ENCODE measurements at regions of chr3 and their contacts with region 1.

Region 1: GRCh38 chr3:10263646-10264363 is 15.5 kb downstream of the TATDN2 start:
- DNase-seq: peak; percentile 40 to 75 (median 54)
- H3K4me3 ChIP-seq: peak overlapping the region; percentile 56
- H3K4me3 Mint-ChIP-seq: peak overlapping the region; percentile 52 to 84 (median 68)
- H3K27ac ChIP-seq: peak overlapping the region; percentile 45
- H3K27ac Mint-ChIP-seq: peak overlapping the region; percentile 70 to 94 (median 90)
- H3K4me1 ChIP-seq: peaks cover 64% of the 10 kb centered on the region
- H3K4me1 Mint-ChIP-seq: peaks cover 73 to 91% (median 88%) of the 10 kb centered on the region in 3 donors
- H3K27me3 ChIP-seq: no peaks in the 10 kb centered on the region
- H3K27me3 Mint-ChIP-seq: no peaks in the 10 kb centered on the region

Region 2: GRCh38 chr3:10115326-10116137 is 148.3 kb before region 1 on chr3 and contains the start of gene BRK1:
- CTCF ChIA-PET with region 1: no interaction called
- POLR2A ChIA-PET with region 1: interaction called, 10 read pairs
- DNase-seq: peak; percentile 89 to 97 (median 91)
- H3K4me3 ChIP-seq: peak within 1 kb of the TSS; percentile 96
- H3K4me3 Mint-ChIP-seq: peak within 1 kb of the TSS; percentile 90 to 100 (median 99)
- H3K27ac ChIP-seq: peak within 1 kb of the TSS; percentile 82
- H3K27ac Mint-ChIP-seq: peak within 1 kb of the TSS; percentile 87 to 100 (median 98)
- H3K4me1 ChIP-seq: peaks cover 34% of the 10 kb centered on the region
- H3K4me1 Mint-ChIP-seq: peaks cover 34 to 47% (median 44%) of the 10 kb centered on the region in 3 donors
- H3K27me3 ChIP-seq: no peaks in the 10 kb centered on the region
- H3K27me3 Mint-ChIP-seq: no peaks in the 10 kb centered on the region
- total RNA-seq, gene BRK1: 105 to 106 TPM

Region 3: DNA sequence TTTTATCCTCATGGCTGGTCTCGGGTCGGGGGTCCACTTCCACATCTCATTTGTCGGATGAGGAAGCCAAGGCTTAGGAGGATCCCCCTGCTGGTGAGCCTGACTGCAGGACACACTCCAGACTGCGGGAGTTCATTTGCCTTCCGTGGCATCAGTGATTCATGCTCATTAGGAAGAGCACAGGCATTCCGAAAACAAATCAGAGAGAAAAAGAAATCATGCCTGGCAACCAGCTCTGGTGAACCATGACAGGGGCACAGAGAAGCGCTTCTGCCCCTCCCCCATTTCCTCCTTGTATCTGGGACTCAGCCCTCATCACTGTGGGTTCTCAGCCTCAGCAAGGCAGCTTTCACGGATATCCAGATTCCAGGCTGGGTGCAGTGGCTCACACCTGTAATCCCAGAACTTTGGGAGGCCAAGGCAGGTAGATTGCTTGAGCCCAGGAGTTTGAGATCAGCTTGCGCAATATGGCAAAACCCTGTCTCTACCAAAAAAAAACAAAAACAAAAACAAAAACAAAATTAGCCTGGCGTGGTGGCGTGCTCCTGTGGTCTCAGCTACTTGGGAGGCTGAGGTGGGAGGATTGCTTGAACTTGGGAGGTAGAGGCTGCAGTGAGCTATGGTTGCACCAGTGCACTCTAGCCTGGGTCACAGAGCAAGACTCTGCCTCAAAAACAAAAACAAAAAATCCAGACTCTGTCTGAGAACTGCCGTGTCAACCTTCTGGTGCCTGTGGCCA is 70.7 kb before region 1 on chr3:
- CTCF ChIA-PET with region 1: interaction called, 12 read pairs
- POLR2A ChIA-PET with region 1: interaction called, 3 read pairs
- DNase-seq: peak; percentile 18 to 67 (median 42)
- H3K4me3 ChIP-seq: peak overlapping the region; percentile 34
- H3K4me3 Mint-ChIP-seq: peak overlapping the region; percentile 67 to 88 (median 84)
- H3K27ac ChIP-seq: peak overlapping the region; percentile 74
- H3K27ac Mint-ChIP-seq: peak overlapping the region; percentile 98 to 99 (median 98)
- H3K4me1 ChIP-seq: peaks cover 91% of the 10 kb centered on the region
- H3K4me1 Mint-ChIP-seq: peaks cover 76 to 84% (median 79%) of the 10 kb centered on the region in 3 donors
- H3K27me3 ChIP-seq: no peaks in the 10 kb centered on the region
- H3K27me3 Mint-ChIP-seq: no peaks in the 10 kb centered on the region

Region 4: GRCh38 chr3:10248184-10249080 is 15.4 kb before region 1 on chr3 and contains the start of gene TATDN2:
- CTCF ChIA-PET with region 1: interaction called, 12 read pairs
- POLR2A ChIA-PET with region 1: interaction called, 9 read pairs
- DNase-seq: peak; percentile 87 to 95 (median 91)
- H3K4me3 ChIP-seq: peak within 1 kb of the TSS; percentile 89
- H3K4me3 Mint-ChIP-seq: peak within 1 kb of the TSS; percentile 98 to 100 (median 99)
- H3K27ac ChIP-seq: peak within 1 kb of the TSS; percentile 83
- H3K27ac Mint-ChIP-seq: peak within 1 kb of the TSS; percentile 85 to 99 (median 97)
- H3K4me1 ChIP-seq: peaks cover 30% of the 10 kb centered on the region
- H3K4me1 Mint-ChIP-seq: peaks cover 47 to 62% (median 51%) of the 10 kb centered on the region in 3 donors
- H3K27me3 ChIP-seq: no peaks in the 10 kb centered on the region
- H3K27me3 Mint-ChIP-seq: no peaks in the 10 kb centered on the region
- total RNA-seq, gene TATDN2: 57.6 to 60.0 TPM

Region 5: GRCh38 chr3:10253731-10254130 is 10.1 kb before region 1 on chr3:
- CTCF ChIA-PET with region 1: interaction called, 12 read pairs
- POLR2A ChIA-PET with region 1: interaction called, 9 read pairs
- DNase-seq: no peak
- H3K4me3 ChIP-seq: no peak overlapping the region
- H3K4me3 Mint-ChIP-seq: peak overlapping the region in 4 of 7 donors; percentile 8 to 37 (median 29)
- H3K27ac ChIP-seq: no peak overlapping the region
- H3K27ac Mint-ChIP-seq: peak overlapping the region in 6 of 8 donors; percentile 50 to 81 (median 72)
- H3K4me1 ChIP-seq: peaks cover 44% of the 10 kb centered on the region
- H3K4me1 Mint-ChIP-seq: peaks cover 67 to 89% (median 74%) of the 10 kb centered on the region in 3 donors
- H3K27me3 ChIP-seq: no peaks in the 10 kb centered on the region
- H3K27me3 Mint-ChIP-seq: no peaks in the 10 kb centered on the region

Measured in CD8-positive, alpha-beta memory T cell (primary cell).